ENCODE measurements at regions of chr6 and their contacts with region 1.

Region 1: DNA sequence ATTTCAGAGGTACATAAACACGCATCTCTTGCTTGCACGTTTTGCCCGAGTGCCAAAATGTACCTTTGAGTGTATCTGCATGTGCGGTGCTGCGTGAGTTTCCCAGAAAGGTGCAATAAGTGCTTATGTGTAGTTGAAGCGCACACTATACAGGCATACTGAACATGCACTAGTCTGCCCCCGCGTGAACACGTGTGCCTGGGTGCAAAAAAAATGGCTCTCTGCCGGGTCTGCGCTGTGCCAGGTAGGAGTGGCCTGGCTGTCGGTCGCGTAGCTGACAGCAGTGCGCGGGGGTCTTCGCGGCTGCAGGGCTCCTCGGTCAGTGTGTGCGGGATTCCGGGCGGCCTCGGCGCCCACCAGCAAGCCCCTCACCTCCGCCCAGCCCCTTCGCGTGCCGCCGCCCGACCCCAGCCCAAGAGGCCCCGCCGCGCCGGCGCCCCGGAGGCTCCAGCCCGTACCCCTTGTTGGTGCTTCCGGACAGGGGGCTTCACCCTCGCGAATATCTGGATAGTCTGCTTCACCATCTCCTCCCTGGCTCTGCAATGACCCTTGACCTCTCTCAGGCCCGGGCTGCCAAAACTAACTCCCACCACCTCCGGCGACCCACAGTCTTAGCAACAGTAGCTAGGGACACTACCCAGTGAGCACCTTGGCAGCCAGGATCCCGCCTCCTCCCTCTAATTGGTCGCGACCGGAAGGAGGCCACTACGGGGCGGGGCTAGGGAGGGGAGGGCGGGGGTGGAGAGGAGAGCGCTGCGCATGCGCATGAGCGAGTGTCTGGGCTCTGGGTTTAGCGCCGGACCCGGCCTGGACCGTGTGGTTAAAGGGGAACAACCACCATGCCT is at the start of gene KIF6:
- DNase-seq: peak; percentile 55 to 88 (median 72)
- ATAC-seq: peak; percentile 99
- H3K4me3 ChIP-seq: peak within 1 kb of the TSS; percentile 56
- H3K4me3 Mint-ChIP-seq: peak within 1 kb of the TSS; percentile 99
- H3K27ac ChIP-seq: no peak within 1 kb of the TSS
- H3K27ac Mint-ChIP-seq: peak within 1 kb of the TSS; percentile 45
- H3K4me1 ChIP-seq: peaks cover 7% of the 10 kb centered on the region
- H3K4me1 Mint-ChIP-seq: peaks cover 8% of the 10 kb centered on the region
- H3K27me3 ChIP-seq: no peaks in the 10 kb centered on the region
- H3K27me3 Mint-ChIP-seq: peaks cover 9% of the 10 kb centered on the region
- CTCF ChIP-seq: no peak
- total RNA-seq, gene KIF6: not detected

Region 2: DNA sequence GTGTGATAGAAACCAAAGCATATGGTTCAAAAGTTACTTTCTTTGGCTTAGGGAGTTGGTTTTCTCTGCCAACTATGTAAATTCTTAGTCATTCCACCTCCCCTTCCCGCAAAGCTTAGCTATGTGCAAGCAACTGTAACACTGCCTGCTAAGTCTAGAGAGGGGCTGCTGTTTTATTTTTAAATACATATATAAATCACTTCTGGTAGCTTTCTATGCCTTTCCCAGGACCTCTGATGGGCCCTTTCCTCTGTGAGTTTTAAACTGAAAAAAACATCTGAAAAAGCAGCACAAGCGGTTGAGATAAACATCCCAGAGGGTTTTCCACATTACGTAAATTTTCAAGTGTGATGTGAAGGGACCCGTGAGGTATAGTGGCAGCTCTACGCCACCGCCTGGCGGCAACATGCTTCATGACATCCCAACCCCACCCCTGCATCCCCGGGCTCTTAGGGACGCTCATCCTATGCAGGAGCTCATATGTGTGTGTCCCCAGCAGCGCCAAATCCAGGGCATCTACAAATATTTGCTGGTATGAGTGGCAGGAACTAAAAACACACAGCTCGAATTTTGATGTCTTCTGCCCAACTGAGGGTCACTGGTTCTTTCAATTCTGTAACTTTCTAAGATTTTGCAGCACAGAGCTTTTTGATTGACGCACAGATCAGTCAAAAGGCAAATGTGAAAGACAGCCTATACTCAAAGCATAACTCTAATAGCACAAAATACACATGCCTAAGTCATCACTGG is 622.8 kb before region 1 on chr6:
- CTCF ChIA-PET with region 1: no interaction called
- POLR2A ChIA-PET with region 1: no interaction called
- intact Hi-C with region 1: loop called in 1 of 2 experiments (anchors 10 kb)
- DNase-seq: peak in 3 of 14 experiments; percentile 32 to 47 (median 36)
- ATAC-seq: peak; percentile 50
- H3K4me3 ChIP-seq: no peak overlapping the region
- H3K4me3 Mint-ChIP-seq: no peak overlapping the region
- H3K27ac ChIP-seq: no peak overlapping the region
- H3K27ac Mint-ChIP-seq: no peak overlapping the region
- H3K4me1 ChIP-seq: peaks cover 3% of the 10 kb centered on the region
- H3K4me1 Mint-ChIP-seq: peaks cover 31% of the 10 kb centered on the region
- H3K27me3 ChIP-seq: no peaks in the 10 kb centered on the region
- H3K27me3 Mint-ChIP-seq: no peaks in the 10 kb centered on the region
- CTCF ChIP-seq: peak; percentile 27

Region 3: GRCh38 chr6:39934131-39934757 is 209.2 kb after region 1 on chr6 and contains the start of gene MOCS1:
- CTCF ChIA-PET with region 1: no interaction called
- POLR2A ChIA-PET with region 1: no interaction called
- intact Hi-C with region 1: loop called in 1 of 2 experiments (anchors 2 kb)
- DNase-seq: peak in 10 of 14 experiments; percentile 19 to 64 (median 34)
- ATAC-seq: peak; percentile 78
- H3K4me3 ChIP-seq: peak within 1 kb of the TSS; percentile 50
- H3K4me3 Mint-ChIP-seq: peak within 1 kb of the TSS; percentile 91
- H3K27ac ChIP-seq: no peak within 1 kb of the TSS
- H3K27ac Mint-ChIP-seq: peak within 1 kb of the TSS; percentile 81
- H3K4me1 ChIP-seq: peaks cover 7% of the 10 kb centered on the region
- H3K4me1 Mint-ChIP-seq: peaks cover 29% of the 10 kb centered on the region
- H3K27me3 ChIP-seq: peaks cover 0 to 5% of the 10 kb centered on the region in 2 experiments
- H3K27me3 Mint-ChIP-seq: no peaks in the 10 kb centered on the region
- CTCF ChIP-seq: no peak
- total RNA-seq, gene MOCS1: 2.0 to 2.7 TPM

Measured in CD4-positive, alpha-beta T cell (primary cell).